ENCODE measurements at regions of chr4 and their contacts with region 1.

Region 1: GRCh38 chr4:6087673-6088341 is 69.6 kb upstream of the C4orf50 start:
- DNase-seq: peak; percentile 55
- H3K4me3 ChIP-seq: no peak overlapping the region
- H3K27ac ChIP-seq: no peak overlapping the region
- H3K4me1 ChIP-seq: no peaks in the 10 kb centered on the region
- H3K27me3 ChIP-seq: peaks cover 15% of the 10 kb centered on the region
- CTCF ChIP-seq: peak; percentile 72

Region 2: GRCh38 chr4:5998333-5998936 is 89.4 kb before region 1 on chr4:
- CTCF ChIA-PET with region 1: interaction called, 13 read pairs
- POLR2A ChIA-PET with region 1: no interaction called
- intact Hi-C with region 1: loop called (anchors 1 kb)
- DNase-seq: peak; percentile 77
- H3K4me3 ChIP-seq: no peak overlapping the region
- H3K27ac ChIP-seq: no peak overlapping the region
- H3K4me1 ChIP-seq: no peaks in the 10 kb centered on the region
- H3K27me3 ChIP-seq: peaks cover 34% of the 10 kb centered on the region
- CTCF ChIP-seq: peak; percentile 95

Region 3: DNA sequence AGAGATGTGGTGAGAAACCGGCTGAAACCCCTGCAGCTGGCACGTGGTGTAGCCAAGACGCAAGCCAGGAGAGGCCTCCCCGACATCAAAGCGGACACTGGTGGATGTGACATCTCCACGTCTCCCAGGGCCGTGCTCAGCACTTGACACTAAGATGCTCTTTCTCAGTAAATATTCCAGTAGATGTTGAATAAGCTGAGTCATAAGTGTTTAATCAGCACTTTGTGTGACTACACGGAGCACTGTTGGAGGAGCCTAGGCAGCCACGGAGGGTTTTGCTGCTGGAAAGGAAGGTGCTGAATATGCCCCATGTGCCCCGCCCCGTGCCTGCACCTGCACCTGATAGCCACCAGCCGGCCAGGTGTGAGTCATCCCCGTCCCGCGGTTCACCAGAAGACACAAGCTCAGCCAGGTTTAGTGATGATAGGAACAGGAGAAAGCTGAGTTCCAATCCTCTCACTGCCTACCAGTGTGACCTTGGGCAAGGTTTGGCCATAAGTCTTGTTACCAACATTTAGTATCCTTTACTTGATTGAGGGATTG is 40.6 kb before region 1 on chr4:
- CTCF ChIA-PET with region 1: no interaction called
- POLR2A ChIA-PET with region 1: no interaction called
- intact Hi-C with region 1: no loop called
- DNase-seq: no peak
- H3K4me3 ChIP-seq: no peak overlapping the region
- H3K27ac ChIP-seq: no peak overlapping the region
- H3K4me1 ChIP-seq: no peaks in the 10 kb centered on the region
- H3K27me3 ChIP-seq: peaks cover 53% of the 10 kb centered on the region
- CTCF ChIP-seq: no peak

Region 4: DNA sequence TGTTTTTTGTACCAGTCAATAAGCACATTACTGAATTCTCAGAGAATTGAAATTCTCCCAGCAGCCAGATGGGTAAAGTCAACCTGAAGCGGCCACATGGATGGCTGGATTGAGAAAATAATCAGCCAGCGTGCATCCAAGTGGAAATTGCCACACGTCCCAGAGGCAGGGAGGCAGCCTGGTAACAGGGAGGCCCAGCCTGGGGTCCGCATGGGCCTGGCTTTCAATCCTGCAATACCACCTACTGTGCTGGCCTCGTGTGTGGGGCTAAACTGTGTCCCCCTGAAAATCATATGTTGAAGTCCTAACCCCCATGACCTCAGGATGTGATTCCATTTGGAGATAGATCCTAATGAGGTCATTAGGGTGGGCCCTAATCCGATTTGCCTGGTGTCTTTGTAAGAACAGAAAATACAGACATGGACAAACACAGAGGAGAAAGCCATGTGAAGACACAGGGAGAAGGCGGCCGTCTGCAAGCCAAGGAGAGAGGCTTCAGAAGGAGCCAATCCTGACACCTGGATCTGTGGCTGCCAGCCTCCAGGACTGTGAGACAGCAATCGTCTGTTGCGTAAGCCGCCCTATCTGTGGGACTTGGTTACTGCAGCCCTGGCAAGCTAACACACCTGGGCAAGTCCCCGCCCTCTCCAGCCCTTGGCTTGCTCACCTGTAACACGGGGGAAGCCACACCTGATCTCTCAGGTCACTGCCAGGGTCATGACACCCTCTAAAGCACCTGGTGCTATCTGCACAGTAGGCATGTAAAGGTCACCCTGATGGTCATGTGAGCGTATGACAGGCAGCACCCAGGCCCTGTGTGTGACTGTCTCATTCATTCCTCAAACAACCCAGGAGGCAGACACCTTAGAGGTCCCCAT is 22.3 kb after region 1 on chr4:
- CTCF ChIA-PET with region 1: no interaction called
- POLR2A ChIA-PET with region 1: no interaction called
- intact Hi-C with region 1: no loop called
- DNase-seq: no peak
- H3K4me3 ChIP-seq: no peak overlapping the region
- H3K27ac ChIP-seq: no peak overlapping the region
- H3K4me1 ChIP-seq: no peaks in the 10 kb centered on the region
- H3K27me3 ChIP-seq: peaks cover 28% of the 10 kb centered on the region
- CTCF ChIP-seq: peak; percentile 39

Region 5: DNA sequence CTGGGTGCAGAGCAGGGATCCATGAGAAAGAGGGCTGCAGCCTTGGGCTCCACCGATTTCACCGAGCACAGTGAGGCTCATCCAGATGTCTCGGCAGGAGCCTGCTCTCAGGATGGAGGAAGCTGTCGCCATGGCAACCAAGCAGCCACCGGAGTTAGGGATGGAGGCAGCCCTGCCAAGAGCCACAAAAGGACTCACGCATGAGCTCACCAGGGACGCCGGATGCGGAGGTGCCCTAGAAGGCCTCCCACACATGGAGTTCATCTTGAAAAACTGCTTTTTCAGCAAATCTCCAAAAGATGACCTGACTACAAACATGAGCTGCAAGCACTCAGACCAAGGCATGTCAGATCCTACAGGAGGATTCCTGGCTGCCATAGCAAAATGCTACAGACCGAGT is 272.6 kb after region 1 on chr4:
- CTCF ChIA-PET with region 1: no interaction called
- POLR2A ChIA-PET with region 1: no interaction called
- intact Hi-C with region 1: no loop called
- DNase-seq: no peak
- H3K4me3 ChIP-seq: no peak overlapping the region
- H3K27ac ChIP-seq: no peak overlapping the region
- H3K4me1 ChIP-seq: no peaks in the 10 kb centered on the region
- H3K27me3 ChIP-seq: peaks cover 23% of the 10 kb centered on the region
- CTCF ChIP-seq: no peak